ENCODE measurements at regions of chr18 and their contacts with region 1.

Region 1: GRCh38 chr18:76405681-76406356 is 89.2 kb downstream of the ZNF516 start:
- DNase-seq: peak; percentile 61 to 87 (median 79)
- ATAC-seq: peak; percentile 42 to 62
- H3K4me3 ChIP-seq: no peak overlapping the region
- H3K27ac ChIP-seq: no peak overlapping the region
- H3K4me1 ChIP-seq: no peaks in the 10 kb centered on the region
- H3K27me3 ChIP-seq: no peaks in the 10 kb centered on the region

Region 2: GRCh38 chr18:76056471-76057110 is 349.2 kb before region 1 on chr18:
- intact Hi-C with region 1: no loop called
- DNase-seq: peak; percentile 62 to 89 (median 81)
- ATAC-seq: peak; percentile 78 to 83
- H3K4me3 ChIP-seq: no peak overlapping the region
- H3K27ac ChIP-seq: no peak overlapping the region
- H3K4me1 ChIP-seq: no peaks in the 10 kb centered on the region
- H3K27me3 ChIP-seq: no peaks in the 10 kb centered on the region

Region 3: DNA sequence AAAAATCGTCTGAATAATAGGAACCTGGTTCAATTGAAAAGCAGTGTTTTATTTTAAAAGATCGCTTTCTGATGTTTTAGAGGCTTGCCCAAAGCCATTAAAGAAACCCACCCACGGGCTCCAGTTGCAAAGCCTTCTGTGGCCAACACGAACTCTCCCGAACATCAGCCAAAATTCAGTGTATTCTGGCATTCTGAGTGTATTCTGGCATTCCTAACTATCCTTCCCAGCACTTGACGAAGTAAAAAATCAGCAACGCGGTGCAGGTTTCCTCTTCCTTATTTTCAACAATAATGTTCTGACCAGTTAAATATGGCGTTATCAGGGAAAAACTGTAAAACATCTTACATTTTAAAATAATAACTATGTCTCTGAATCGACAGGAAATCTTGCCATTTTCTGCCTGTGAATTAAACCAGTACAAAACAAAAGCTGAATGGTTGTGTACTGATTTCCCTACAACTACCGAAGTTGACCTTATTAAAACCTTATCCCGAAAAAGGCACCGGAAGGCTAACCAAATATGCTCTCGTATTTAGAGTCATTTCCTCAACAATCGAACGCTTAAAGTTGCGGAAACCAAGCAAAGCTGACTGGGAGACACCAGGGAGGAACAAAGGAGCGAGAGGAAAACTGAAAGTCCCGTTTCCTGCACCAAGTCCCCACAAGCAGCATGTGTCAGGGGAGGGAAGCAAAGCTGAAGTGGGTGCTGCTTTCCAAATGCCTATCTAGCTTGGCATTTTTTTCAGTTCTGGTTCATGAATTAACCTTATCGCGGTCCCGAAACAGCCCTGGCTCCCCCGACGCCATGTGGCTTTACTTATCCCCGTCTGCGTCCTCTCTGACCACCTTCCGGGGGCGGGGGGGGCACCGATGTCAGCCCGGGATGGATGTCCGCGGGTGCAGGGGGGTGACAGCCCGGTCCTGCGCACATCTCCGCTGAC is 44.9 kb after region 1 on chr18:
- intact Hi-C with region 1: no loop called
- DNase-seq: peak; percentile 63 to 87 (median 86)
- ATAC-seq: peak; percentile 79 to 81
- H3K4me3 ChIP-seq: peak overlapping the region; percentile 60
- H3K27ac ChIP-seq: peak overlapping the region; percentile 84
- H3K4me1 ChIP-seq: peaks cover 12% of the 10 kb centered on the region
- H3K27me3 ChIP-seq: no peaks in the 10 kb centered on the region

Region 4: GRCh38 chr18:76467371-76468190 is 61.8 kb after region 1 on chr18:
- intact Hi-C with region 1: no loop called
- DNase-seq: peak in 2 of 3 donors; percentile 75 to 77
- ATAC-seq: peak; percentile 73 to 81
- H3K4me3 ChIP-seq: no peak overlapping the region
- H3K27ac ChIP-seq: no peak overlapping the region
- H3K4me1 ChIP-seq: no peaks in the 10 kb centered on the region
- H3K27me3 ChIP-seq: no peaks in the 10 kb centered on the region

Region 5: DNA sequence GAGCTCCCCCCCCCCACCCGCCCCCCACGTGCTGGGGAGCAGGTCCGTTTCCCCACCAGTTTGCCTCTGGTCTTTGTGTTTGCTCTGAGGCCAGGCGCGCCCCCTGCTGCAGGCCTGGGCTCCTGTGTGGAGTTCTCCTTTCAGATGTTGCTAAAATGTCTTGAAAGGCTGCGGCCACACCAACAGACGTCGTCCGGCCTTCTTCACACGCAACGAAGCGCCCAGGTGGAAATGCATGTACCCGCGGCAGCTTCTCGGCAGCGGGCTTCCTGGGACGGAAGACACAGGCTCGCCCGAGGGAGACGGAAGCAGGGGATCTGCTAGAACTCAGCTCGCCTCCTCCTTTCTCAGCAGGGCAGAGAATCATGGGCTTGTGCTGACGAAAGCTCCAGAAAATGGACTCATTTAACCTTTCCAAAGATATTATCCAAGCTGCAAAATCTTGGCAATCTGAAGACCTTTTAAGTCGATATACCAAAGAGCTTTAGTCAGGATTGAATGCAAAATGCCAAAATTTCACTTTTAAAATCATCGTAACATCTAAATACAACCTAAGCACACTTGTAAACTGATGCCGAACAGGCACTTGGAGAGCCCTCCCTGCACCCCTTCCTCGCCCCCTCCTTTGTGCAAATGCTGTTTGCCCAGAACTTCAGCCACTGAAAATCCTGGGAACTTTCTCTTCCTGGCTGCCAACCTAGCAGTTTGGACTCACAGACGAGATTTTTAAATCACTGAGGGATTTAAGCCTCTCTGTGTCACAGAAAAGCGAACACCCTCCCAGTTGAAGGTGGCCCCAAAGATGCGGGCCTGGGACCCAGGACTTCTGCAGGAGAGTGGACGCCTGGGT is 214.7 kb after region 1 on chr18:
- intact Hi-C with region 1: loop called in 1 of 4 experiments (anchors 10 kb)
- DNase-seq: peak; percentile 70 to 91 (median 86)
- ATAC-seq: peak; percentile 89
- H3K4me3 ChIP-seq: peak overlapping the region; percentile 22
- H3K27ac ChIP-seq: no peak overlapping the region
- H3K4me1 ChIP-seq: peaks cover 1% of the 10 kb centered on the region
- H3K27me3 ChIP-seq: no peaks in the 10 kb centered on the region

Region 6: DNA sequence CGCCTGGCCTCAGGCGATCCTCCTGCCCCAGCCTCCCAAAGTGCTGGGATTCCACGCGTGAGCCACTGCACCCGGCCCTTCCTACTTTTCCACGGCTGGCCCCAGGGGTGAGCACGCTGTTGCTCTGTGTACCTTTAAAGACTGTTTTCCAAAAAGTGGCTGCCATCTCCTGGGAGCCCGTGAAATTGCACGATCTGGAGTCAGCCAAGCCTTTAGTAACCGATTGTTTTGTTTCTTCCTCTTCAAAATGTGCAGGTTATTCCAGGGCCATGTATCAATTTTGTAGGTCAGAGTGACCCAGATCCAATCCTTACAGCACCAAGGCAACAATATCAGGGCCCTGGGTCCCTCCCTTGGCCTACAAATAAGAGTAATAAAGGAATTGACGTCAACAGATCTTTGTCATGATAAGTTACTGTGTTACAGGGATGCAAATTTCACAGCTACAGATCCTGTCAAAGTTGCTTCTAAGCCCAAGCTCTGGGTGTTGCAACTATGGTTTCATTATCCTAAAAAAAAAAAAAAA is 281.0 kb after region 1 on chr18:
- intact Hi-C with region 1: loop called in 1 of 4 experiments (anchors 10 kb)
- DNase-seq: peak; percentile 63 to 81 (median 78)
- ATAC-seq: peak; percentile 77 to 87
- H3K4me3 ChIP-seq: no peak overlapping the region
- H3K27ac ChIP-seq: no peak overlapping the region
- H3K4me1 ChIP-seq: no peaks in the 10 kb centered on the region
- H3K27me3 ChIP-seq: no peaks in the 10 kb centered on the region

Region 7: DNA sequence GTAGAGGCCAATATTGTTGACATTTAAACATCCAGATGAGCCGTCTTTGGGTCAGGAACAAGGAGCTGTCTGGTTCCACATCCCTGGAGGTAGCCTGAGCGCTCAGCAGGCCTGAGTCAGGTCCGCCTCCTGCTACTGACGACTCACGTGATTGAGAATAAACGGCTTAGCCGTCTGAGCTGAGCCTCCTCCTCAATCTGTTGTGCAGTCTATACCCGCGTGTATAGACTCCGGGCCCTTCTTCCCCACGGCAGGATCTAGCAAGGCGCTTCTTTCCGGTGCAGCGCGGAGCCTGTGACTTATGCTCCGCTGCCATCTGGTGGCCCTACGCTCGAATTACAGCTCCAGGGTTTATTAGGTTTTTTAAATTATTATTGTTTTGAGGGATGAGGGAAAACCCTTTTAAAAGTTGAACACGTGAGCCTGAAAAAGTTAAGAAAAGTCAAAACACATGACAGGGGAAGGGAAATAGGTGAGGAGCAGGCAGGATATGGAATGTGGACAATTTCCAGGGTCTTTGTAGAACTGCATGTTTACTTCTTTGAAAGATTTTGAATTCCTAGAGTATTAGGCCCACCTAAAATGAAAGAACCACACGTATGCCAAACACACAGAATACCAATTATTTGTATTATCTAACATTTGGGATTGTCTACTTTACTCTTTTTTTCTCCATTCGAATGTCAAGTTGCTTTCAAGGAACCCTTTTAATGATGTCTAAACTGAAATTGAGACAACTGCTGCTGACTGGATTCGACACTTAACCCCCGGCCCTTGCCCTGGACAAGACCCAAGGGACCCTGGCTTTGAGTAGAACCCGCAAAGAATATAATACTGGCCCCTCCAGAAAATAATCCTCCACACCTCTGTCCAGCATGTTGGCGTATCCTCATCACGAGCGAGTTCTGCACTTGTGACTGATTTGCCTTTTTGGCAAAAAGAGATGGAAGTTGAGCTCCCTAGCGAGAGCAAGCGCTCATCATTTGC is 304.1 kb after region 1 on chr18:
- intact Hi-C with region 1: loop called in 2 of 4 experiments (anchors 5 to 10 kb)
- DNase-seq: peak; percentile 66 to 87 (median 81)
- ATAC-seq: peak; percentile 75 to 83
- H3K4me3 ChIP-seq: no peak overlapping the region
- H3K27ac ChIP-seq: no peak overlapping the region
- H3K4me1 ChIP-seq: no peaks in the 10 kb centered on the region
- H3K27me3 ChIP-seq: no peaks in the 10 kb centered on the region